Common myeloid progenitor, CD34-positive (primary cell): ENCODE measurements at regions of chr2 and their contacts with region 1.

Region 1: GRCh38 chr2:108607706-108608301 is 73.5 kb downstream of the LIMS1 start:
- DNase-seq: peak; percentile 64 to 84 (median 81)
- H3K4me3 ChIP-seq: no peak overlapping the region
- H3K27ac ChIP-seq: no peak overlapping the region
- H3K4me1 ChIP-seq: peaks cover 5 to 75% (median 48%) of the 10 kb centered on the region in 4 experiments
- H3K27me3 ChIP-seq: no peaks in the 10 kb centered on the region

Region 2: GRCh38 chr2:108621087-108621559 is 13.3 kb after region 1 on chr2:
- CTCF ChIA-PET with region 1: interaction called, 601 read pairs
- POLR2A ChIA-PET with region 1: interaction called, 4 read pairs
- DNase-seq: peak; percentile 67 to 94 (median 89)
- H3K4me3 ChIP-seq: peak overlapping the region in 5 of 7 experiments; percentile 50 to 67 (median 54)
- H3K27ac ChIP-seq: peak overlapping the region; percentile 48 to 80
- H3K4me1 ChIP-seq: peaks cover 46 to 94% (median 74%) of the 10 kb centered on the region in 4 experiments
- H3K27me3 ChIP-seq: no peaks in the 10 kb centered on the region